Panc1 (cell line): ENCODE measurements at regions of chr1 and their contacts with region 1.

Region 1: GRCh38 chr1:40612345-40612831 is 53.1 kb downstream of the RIMS3 start:
- DNase-seq: peak; percentile 64
- ATAC-seq: peak; percentile 99
- H3K4me3 ChIP-seq: peak overlapping the region in 1 of 2 experiments; percentile 30; a peak in 2 of 4 replicates
- H3K27ac ChIP-seq: no peak overlapping the region
- H3K4me1 ChIP-seq: no peaks in the 10 kb centered on the region
- H3K27me3 ChIP-seq: no peaks in the 10 kb centered on the region
- CTCF ChIP-seq: peak; percentile 95

Region 2: GRCh38 chr1:40650075-40650474 is 37.7 kb after region 1 on chr1:
- CTCF ChIA-PET with region 1: no interaction called
- POLR2A ChIA-PET with region 1: no interaction called
- in situ Hi-C with region 1: no loop called
- intact Hi-C with region 1: no loop called
- DNase-seq: no peak
- ATAC-seq: peak; percentile 59; the same call in 1 of the 2 replicates
- H3K4me3 ChIP-seq: no peak overlapping the region
- H3K27ac ChIP-seq: no peak overlapping the region
- H3K4me1 ChIP-seq: no peaks in the 10 kb centered on the region
- H3K27me3 ChIP-seq: no peaks in the 10 kb centered on the region
- CTCF ChIP-seq: peak; percentile 77

Region 3: GRCh38 chr1:40668769-40669525 is 56.6 kb after region 1 on chr1:
- CTCF ChIA-PET with region 1: no interaction called
- POLR2A ChIA-PET with region 1: no interaction called
- in situ Hi-C with region 1: no loop called
- intact Hi-C with region 1: loop called (anchors 5 kb)
- DNase-seq: peak; percentile 61
- ATAC-seq: peak; percentile 68
- H3K4me3 ChIP-seq: peak overlapping the region; percentile 19 to 29
- H3K27ac ChIP-seq: no peak overlapping the region
- H3K4me1 ChIP-seq: peaks cover 5% of the 10 kb centered on the region
- H3K27me3 ChIP-seq: no peaks in the 10 kb centered on the region
- CTCF ChIP-seq: peak; percentile 97

Region 4: GRCh38 chr1:40723196-40723945 is 111.0 kb after region 1 on chr1:
- CTCF ChIA-PET with region 1: no interaction called
- POLR2A ChIA-PET with region 1: interaction called, 14 read pairs
- in situ Hi-C with region 1: no loop called
- intact Hi-C with region 1: no loop called
- DNase-seq: no peak
- ATAC-seq: no peak
- H3K4me3 ChIP-seq: no peak overlapping the region
- H3K27ac ChIP-seq: no peak overlapping the region
- H3K4me1 ChIP-seq: no peaks in the 10 kb centered on the region
- H3K27me3 ChIP-seq: no peaks in the 10 kb centered on the region
- CTCF ChIP-seq: no peak

Region 5: DNA sequence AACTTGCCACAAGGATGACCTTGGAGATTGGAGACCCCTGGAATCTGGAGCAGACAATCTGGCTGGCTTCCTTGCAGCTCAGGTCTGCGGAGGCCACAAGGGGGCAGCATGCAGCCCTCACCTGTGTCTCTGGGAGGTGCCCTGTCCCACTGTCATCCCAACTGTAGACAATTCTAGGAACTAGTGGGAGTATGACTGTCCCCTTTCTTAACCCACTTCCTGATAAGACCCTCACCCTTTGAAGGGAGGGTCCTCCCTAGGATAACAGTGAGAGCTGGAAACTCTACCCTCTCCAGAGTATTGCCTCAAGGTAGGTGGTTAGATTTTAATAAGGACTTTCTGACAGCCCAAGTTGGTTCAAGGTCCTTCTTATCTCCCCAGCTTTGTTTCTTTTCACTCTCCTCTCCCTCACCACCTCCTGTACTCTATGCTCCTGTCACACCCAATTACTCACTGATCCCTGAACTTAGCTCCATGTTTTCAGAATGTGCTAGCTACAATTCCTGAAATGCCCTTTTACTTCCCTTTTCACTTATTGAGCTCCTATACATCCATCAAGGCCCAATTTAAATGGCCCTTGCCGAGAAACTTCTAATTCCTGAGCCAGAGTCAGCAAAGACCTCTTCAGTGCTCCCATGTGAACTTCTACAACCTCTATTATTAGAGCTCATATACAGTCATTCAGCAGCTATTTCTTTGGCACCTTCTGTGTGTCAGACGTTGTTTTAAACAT is 162.0 kb after region 1 on chr1:
- CTCF ChIA-PET with region 1: no interaction called
- POLR2A ChIA-PET with region 1: no interaction called
- in situ Hi-C with region 1: no loop called
- intact Hi-C with region 1: loop called (anchors 5 kb)
- DNase-seq: peak; percentile 47
- ATAC-seq: peak; percentile 82
- H3K4me3 ChIP-seq: no peak overlapping the region
- H3K27ac ChIP-seq: no peak overlapping the region
- H3K4me1 ChIP-seq: no peaks in the 10 kb centered on the region
- H3K27me3 ChIP-seq: no peaks in the 10 kb centered on the region
- CTCF ChIP-seq: peak; percentile 93

Region 6: DNA sequence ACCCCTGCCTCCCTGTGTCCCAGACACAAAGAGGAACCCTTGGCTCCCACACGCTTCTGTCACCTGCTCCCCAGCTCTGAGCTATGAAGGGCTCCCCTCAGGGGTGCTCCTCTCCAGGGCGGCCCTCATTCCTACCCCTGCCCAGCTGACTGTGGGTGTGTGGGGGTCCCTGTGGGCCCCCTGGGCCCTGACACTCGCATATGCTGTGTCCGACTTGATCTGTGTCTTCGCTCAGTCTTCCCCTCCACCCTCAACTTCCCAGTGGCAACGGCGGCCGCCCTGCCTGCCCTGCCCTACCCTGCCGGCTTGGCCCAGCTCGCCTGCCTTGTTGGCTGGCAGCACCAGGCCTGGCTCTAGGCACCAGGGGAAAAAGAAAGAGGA is 172.4 kb after region 1 on chr1:
- CTCF ChIA-PET with region 1: no interaction called
- POLR2A ChIA-PET with region 1: no interaction called
- in situ Hi-C with region 1: no loop called
- intact Hi-C with region 1: no loop called
- DNase-seq: no peak
- ATAC-seq: no peak
- H3K4me3 ChIP-seq: peak overlapping the region; percentile 32 to 45; a peak in 3 of 4 replicates
- H3K27ac ChIP-seq: no peak overlapping the region
- H3K4me1 ChIP-seq: peaks cover 23% of the 10 kb centered on the region
- H3K27me3 ChIP-seq: no peaks in the 10 kb centered on the region
- CTCF ChIP-seq: no peak

Region 7: GRCh38 chr1:40849801-40850592 is 237.6 kb after region 1 on chr1:
- CTCF ChIA-PET with region 1: interaction called, 3 read pairs
- POLR2A ChIA-PET with region 1: no interaction called
- in situ Hi-C with region 1: no loop called
- intact Hi-C with region 1: loop called (anchors 5 kb)
- DNase-seq: no peak
- ATAC-seq: peak; percentile 89
- H3K4me3 ChIP-seq: no peak overlapping the region
- H3K27ac ChIP-seq: peak overlapping the region; percentile 49; the same call in 1 of the 2 replicates
- H3K4me1 ChIP-seq: no peaks in the 10 kb centered on the region
- H3K27me3 ChIP-seq: no peaks in the 10 kb centered on the region
- CTCF ChIP-seq: peak; percentile 93